IMR-90 (cell line): ENCODE measurements at regions of chr16 and their contacts with region 1.

Region 1: GRCh38 chr16:66406534-66407221 is 20.4 kb upstream of the BEAN1 start:
- DNase-seq: peak; percentile 49
- ATAC-seq: peak; percentile 88
- H3K4me3 ChIP-seq: peak overlapping the region; percentile 49
- H3K27ac ChIP-seq: no peak overlapping the region
- H3K4me1 ChIP-seq: peaks cover 6% of the 10 kb centered on the region
- H3K27me3 ChIP-seq: peaks cover 17% of the 10 kb centered on the region
- CTCF ChIP-seq: peak; percentile 93
- POLR2A ChIP-seq: no peak
- RAD21 ChIP-seq: peak; percentile 94

Region 2: GRCh38 chr16:66483689-66484481 is 77.2 kb after region 1 on chr16:
- CTCF ChIA-PET with region 1: interaction called, 7 read pairs
- POLR2A ChIA-PET with region 1: no interaction called
- dilution Hi-C with region 1: no loop called
- in situ Hi-C with region 1: loop called (anchors 5 kb)
- intact Hi-C with region 1: loop called (anchors 1 kb)
- DNase-seq: peak; percentile 63
- ATAC-seq: peak; percentile 89
- H3K4me3 ChIP-seq: no peak overlapping the region
- H3K27ac ChIP-seq: no peak overlapping the region
- H3K4me1 ChIP-seq: peaks cover 11% of the 10 kb centered on the region; the same call in 1 of the 2 replicates
- H3K27me3 ChIP-seq: no peaks in the 10 kb centered on the region
- CTCF ChIP-seq: peak; percentile 97
- POLR2A ChIP-seq: 0 out of 2 replicates have a peak, but pooled peaks have one; percentile 30
- RAD21 ChIP-seq: peak; percentile 95

Region 3: DNA sequence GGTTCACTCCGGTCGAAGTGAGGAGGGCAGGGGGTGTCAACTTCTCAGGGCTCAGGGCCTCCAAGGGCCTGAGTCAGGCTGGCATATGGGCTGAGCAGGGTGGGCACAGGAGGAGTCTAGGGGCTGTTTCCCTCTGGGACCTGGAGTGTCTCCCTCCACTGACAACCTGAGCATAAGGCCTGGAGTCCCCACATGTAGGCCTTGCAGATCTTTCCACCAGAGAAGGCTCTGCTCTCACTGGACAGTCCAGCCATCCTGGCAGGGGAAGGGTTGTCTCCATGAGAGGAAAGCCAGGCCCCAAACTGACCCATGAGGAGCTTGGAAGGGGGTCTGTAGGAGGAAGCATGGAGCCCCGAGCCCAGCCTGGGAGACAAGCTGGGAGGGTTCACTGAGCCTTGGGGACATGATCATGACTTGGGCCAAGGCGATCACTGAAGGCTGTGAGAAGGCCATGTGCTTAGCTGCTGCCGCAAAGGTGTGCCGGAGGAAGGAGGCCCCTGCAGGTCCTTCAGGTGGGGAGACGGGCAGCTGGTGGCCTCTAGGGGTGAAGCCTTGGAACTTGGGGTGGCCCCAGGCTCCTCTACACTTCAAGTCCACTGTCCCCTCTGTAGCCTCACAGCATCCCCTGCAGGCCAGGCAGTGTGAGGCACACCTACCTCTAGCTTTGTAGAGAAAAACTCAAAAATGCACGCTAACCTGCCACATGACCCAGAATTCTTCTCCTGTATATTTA is 182.5 kb after region 1 on chr16:
- CTCF ChIA-PET with region 1: no interaction called
- POLR2A ChIA-PET with region 1: no interaction called
- dilution Hi-C with region 1: no loop called
- in situ Hi-C with region 1: no loop called
- intact Hi-C with region 1: loop called (anchors 5 kb)
- DNase-seq: peak; percentile 18
- ATAC-seq: peak; percentile 63; the same call in 1 of the 2 replicates
- H3K4me3 ChIP-seq: no peak overlapping the region
- H3K27ac ChIP-seq: no peak overlapping the region
- H3K4me1 ChIP-seq: no peaks in the 10 kb centered on the region
- H3K27me3 ChIP-seq: peaks cover 24% of the 10 kb centered on the region
- CTCF ChIP-seq: peak; percentile 51
- POLR2A ChIP-seq: no peak
- RAD21 ChIP-seq: peak; percentile 57

Region 4: GRCh38 chr16:66717112-66717675 is 310.5 kb after region 1 on chr16:
- CTCF ChIA-PET with region 1: no interaction called
- POLR2A ChIA-PET with region 1: no interaction called
- dilution Hi-C with region 1: no loop called
- in situ Hi-C with region 1: no loop called
- intact Hi-C with region 1: loop called (anchors 5 kb)
- DNase-seq: peak; percentile 88
- ATAC-seq: peak; percentile 67
- H3K4me3 ChIP-seq: no peak overlapping the region
- H3K27ac ChIP-seq: no peak overlapping the region
- H3K4me1 ChIP-seq: peaks cover 7% of the 10 kb centered on the region
- H3K27me3 ChIP-seq: no peaks in the 10 kb centered on the region
- CTCF ChIP-seq: peak; percentile 52
- POLR2A ChIP-seq: no peak
- RAD21 ChIP-seq: peak; percentile 36

Region 5: DNA sequence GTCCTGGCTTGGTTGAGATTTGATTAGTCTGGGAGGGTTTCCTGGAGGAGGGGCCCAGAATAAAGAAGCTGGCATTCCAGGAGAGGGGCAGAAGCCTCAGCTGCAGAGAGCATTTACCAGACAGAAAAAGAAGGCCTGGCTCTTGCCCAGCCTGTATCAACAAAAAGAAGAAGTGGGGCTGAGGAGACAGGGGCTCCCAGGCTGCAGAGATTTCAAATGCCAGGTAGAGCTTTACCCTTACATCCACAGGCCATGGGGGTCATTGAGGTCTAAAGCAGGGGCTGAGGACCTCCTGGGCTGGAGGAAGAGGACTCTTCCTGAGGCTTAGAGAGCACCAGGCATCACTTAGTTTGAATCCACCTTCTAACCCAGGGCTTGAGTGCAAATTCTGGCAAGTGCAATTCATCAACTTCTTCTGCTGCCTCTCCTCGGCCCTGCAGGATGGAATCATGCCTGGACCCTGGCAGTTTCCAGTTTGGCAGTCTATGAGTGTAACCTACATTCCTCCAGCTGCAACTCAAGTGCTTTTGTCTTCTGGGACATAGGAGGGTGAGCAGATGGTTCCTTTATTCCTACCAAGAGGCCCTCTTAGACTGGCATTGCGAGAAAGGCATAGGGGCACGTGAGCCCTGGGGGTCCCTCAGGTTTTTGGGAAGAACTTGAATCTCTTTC is 452.9 kb after region 1 on chr16:
- CTCF ChIA-PET with region 1: no interaction called
- POLR2A ChIA-PET with region 1: no interaction called
- dilution Hi-C with region 1: no loop called
- in situ Hi-C with region 1: loop called (anchors 10 kb)
- intact Hi-C with region 1: no loop called
- DNase-seq: no peak
- ATAC-seq: peak; percentile 27; the same call in 1 of the 2 replicates
- H3K4me3 ChIP-seq: no peak overlapping the region
- H3K27ac ChIP-seq: no peak overlapping the region
- H3K4me1 ChIP-seq: no peaks in the 10 kb centered on the region
- H3K27me3 ChIP-seq: peaks cover 4% of the 10 kb centered on the region; the same call in 1 of the 2 replicates
- CTCF ChIP-seq: no peak
- POLR2A ChIP-seq: no peak
- RAD21 ChIP-seq: no peak